K562 (cell line): ENCODE measurements at regions of chr4 and their contacts with region 1.

Region 1: DNA sequence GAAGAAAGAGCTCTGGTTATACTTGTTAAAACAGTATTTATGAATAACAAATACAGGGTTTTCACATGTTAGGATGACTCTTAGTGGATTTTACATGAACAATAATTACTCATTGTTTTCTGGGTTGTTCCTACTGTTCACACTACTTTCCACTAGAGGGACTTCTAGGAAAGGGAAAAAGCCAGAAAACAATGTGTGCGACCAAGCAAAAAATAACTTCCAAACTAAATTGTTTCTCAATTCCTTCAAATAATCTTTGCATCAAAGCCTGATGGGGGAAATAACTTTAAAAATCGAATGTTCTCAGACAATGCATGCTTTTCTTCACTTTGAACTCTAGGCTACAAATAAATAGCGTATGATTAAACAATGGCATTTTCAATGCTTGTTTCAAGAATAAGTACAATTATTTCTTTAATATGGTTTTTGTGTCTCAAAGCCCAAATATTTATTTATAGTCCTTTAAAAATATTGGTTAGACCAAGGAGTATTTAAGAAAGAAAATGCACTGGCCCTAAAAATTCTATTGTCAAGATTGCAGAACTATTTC is 72.1 kb upstream of the ETNPPL start:
- DNase-seq: peak in 2 of 4 experiments; percentile 20 to 44
- ATAC-seq: peak; percentile 91
- H3K4me3 ChIP-seq: no peak overlapping the region
- H3K27ac ChIP-seq: no peak overlapping the region
- H3K4me1 ChIP-seq: no peaks in the 10 kb centered on the region; a peak in 1 of 5 replicates
- H3K27me3 ChIP-seq: peaks cover 3 to 4% of the 10 kb centered on the region in 2 experiments; a peak in 3 of 5 replicates
- CTCF ChIP-seq: peak; percentile 57 to 89 (median 63); a peak in 4 of 6 replicates
- EP300 ChIP-seq: no peak
- POLR2A ChIP-seq: no peak
- RAD21 ChIP-seq: peak; percentile 95

Region 2: DNA sequence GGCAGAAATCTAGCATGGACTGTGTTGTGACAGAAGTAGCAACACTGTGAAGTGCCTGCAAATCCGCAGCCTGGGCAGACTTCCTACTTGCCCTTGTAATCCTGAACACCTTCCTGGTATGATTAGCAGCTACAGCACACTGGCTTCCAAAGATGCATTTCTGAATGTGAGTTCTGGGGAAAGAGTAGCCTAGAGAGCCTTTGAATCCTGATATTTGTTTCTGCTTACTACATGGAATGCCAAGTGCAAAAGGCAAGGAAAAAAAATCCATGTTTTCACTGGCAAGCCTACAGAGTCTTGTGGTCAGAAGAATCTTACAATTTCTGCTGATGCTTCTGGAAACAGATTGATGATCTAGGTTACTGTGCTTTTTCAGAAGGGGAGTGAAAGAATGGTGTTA is 243.8 kb after region 1 on chr4:
- CTCF ChIA-PET with region 1: no interaction called
- POLR2A ChIA-PET with region 1: no interaction called
- in situ Hi-C with region 1: no loop called
- intact Hi-C with region 1: loop called (anchors 2 kb)
- DNase-seq: no peak
- ATAC-seq: no peak; the same call in 2 of the 3 replicates
- H3K4me3 ChIP-seq: no peak overlapping the region
- H3K27ac ChIP-seq: no peak overlapping the region
- H3K4me1 ChIP-seq: no peaks in the 10 kb centered on the region; a peak in 1 of 5 replicates
- H3K27me3 ChIP-seq: no peaks in the 10 kb centered on the region
- CTCF ChIP-seq: no peak
- EP300 ChIP-seq: no peak
- POLR2A ChIP-seq: no peak
- RAD21 ChIP-seq: no peak

Region 3: GRCh38 chr4:109294006-109294405 is 459.1 kb after region 1 on chr4:
- CTCF ChIA-PET with region 1: interaction called, 13 read pairs
- POLR2A ChIA-PET with region 1: no interaction called
- in situ Hi-C with region 1: no loop called
- intact Hi-C with region 1: loop called (anchors 1 kb)
- DNase-seq: peak; percentile 42 to 71 (median 50)
- ATAC-seq: peak; percentile 90
- H3K4me3 ChIP-seq: no peak overlapping the region
- H3K27ac ChIP-seq: no peak overlapping the region
- H3K4me1 ChIP-seq: peaks cover 0 to 6% of the 10 kb centered on the region in 2 experiments; a peak in 3 of 5 replicates
- H3K27me3 ChIP-seq: no peaks in the 10 kb centered on the region
- CTCF ChIP-seq: peak; percentile 74 to 89 (median 78)
- EP300 ChIP-seq: no peak
- POLR2A ChIP-seq: no peak
- RAD21 ChIP-seq: peak; percentile 69 to 84

Region 4: GRCh38 chr4:109332926-109333464 is 498.1 kb after region 1 on chr4:
- CTCF ChIA-PET with region 1: interaction called, 5 read pairs
- POLR2A ChIA-PET with region 1: no interaction called
- in situ Hi-C with region 1: no loop called
- intact Hi-C with region 1: loop called (anchors 2 kb)
- DNase-seq: peak; percentile 17 to 54 (median 32)
- ATAC-seq: peak; percentile 97
- H3K4me3 ChIP-seq: no peak overlapping the region
- H3K27ac ChIP-seq: no peak overlapping the region
- H3K4me1 ChIP-seq: no peaks in the 10 kb centered on the region
- H3K27me3 ChIP-seq: no peaks in the 10 kb centered on the region
- CTCF ChIP-seq: peak; percentile 72 to 81 (median 76)
- EP300 ChIP-seq: no peak
- POLR2A ChIP-seq: no peak
- RAD21 ChIP-seq: peak; percentile 54 to 75